Calu3 (cell line): ENCODE measurements at regions of chr11 and their contacts with region 1.

Region 1: DNA sequence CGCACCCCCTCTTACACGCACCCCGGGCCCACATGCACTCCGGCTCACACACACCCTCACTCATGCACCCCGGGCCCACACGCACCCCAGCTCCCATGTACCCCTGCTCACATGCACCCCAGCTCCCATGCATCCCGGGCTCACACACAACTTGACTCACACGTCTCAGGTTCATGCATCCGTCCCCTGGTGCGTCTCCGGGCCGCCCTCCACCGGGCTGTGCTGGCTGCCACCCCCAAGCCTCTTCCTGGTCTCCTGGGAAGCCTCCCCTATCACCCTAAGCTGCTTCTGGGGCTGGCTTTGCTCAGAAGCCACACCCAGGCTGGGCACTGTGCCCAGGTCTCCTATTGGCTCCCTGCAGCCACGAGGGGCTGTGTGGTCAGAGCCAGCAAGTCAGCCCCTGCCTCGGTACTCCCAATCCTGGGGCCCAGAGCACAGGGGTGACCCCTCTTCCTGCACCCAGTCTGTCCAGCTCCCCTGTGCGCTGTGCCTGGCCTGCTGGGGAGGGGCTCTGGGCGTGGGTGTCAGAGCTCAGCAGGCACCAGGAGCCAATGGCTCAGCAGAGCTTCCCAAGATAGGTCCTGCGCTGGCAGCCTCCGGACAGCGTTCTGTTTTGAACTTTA is 17.0 kb downstream of the TSPAN4 start:
- DNase-seq: peak; percentile 91
- H3K4me3 Mint-ChIP-seq: peak overlapping the region; percentile 72
- H3K27ac Mint-ChIP-seq: peak overlapping the region; percentile 74
- H3K4me1 Mint-ChIP-seq: peaks cover 9% of the 10 kb centered on the region
- H3K27me3 Mint-ChIP-seq: peaks cover 15% of the 10 kb centered on the region
- CTCF ChIP-seq: no peak

Region 2: DNA sequence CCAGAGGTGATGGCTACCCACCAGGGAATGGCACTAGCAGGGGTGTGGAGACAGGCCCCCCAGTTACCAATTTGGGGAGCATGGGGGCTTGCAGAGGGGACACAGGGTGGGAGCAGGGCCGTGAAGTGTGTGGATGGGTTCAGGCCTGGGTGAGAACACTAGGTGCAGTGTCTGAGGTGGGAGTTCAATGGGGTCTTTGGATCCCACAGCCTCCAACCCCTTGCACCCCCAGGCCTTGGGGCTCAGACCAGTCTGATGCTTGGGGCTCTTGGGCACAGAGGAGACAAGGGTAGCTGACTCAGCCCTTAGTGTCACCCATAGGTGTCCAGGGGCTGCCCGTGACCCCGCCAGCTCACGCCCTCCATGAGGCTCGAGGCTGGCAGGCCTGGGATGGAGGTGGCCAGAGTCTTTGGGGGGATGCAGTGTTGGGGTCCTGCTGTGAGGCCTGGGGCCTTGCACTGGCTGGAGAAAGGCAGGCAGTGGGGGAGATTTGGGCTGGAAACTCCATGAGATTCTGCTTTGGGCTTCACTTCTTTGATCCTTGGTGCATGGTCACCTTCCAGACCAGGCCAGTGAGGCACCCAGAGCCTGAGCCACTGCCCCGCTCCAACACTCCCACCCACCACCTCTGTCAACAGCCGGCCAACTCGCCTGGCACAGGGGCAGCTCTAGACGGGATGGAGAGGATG is 321.5 kb before region 1 on chr11:
- CTCF ChIA-PET with region 1: no interaction called
- intact Hi-C with region 1: no loop called
- DNase-seq: no peak
- H3K4me3 Mint-ChIP-seq: peak overlapping the region; percentile 90
- H3K27ac Mint-ChIP-seq: peak overlapping the region; percentile 66
- H3K4me1 Mint-ChIP-seq: peaks cover 7% of the 10 kb centered on the region
- H3K27me3 Mint-ChIP-seq: no peaks in the 10 kb centered on the region
- CTCF ChIP-seq: no peak

Region 3: DNA sequence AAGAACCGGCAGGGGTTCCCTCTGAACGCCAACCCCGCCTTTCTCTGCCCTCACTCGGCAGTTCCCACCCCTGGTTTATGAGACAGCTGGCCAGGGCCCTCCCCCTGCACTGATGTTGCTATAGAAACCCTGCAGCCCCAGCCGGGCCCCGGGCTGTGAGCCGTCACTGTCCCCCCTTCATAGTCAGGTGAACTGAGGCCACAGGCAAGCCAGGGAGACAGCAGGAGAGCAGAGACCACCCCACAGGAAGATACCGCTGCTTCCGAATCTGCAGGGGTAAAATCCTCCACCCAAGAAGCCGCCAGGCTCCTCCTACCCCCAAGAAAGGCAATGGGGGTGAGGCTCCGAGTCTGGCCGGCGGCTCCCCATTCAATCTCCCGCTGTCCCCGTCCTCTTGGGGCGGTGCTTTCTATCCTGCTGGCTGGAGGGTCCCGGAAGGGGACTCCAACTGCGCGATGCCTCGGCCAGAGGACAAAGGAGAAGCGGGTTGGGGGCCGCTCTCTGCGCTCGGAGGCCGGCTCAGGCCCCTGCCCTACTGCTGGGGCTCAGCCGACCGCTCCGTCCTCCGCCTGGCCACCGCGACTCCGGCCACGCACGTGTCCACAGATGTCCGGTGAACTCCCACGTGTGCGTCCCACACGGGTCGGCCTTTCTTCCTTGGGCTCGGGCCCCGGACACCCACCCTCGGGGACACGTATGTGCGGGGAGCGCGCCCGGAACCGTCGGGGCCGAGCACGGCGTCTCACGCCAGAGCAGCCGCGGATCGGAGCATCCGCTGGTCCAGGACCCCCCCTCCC is 62.1 kb before region 1 on chr11:
- CTCF ChIA-PET with region 1: interaction called, 20 read pairs
- intact Hi-C with region 1: no loop called
- DNase-seq: peak; percentile 74
- H3K4me3 Mint-ChIP-seq: peak overlapping the region; percentile 83
- H3K27ac Mint-ChIP-seq: peak overlapping the region; percentile 58
- H3K4me1 Mint-ChIP-seq: no peaks in the 10 kb centered on the region
- H3K27me3 Mint-ChIP-seq: no peaks in the 10 kb centered on the region
- CTCF ChIP-seq: no peak

Region 4: GRCh38 chr11:942823-943222 is 83.2 kb after region 1 on chr11:
- CTCF ChIA-PET with region 1: no interaction called
- intact Hi-C with region 1: no loop called
- DNase-seq: no peak
- H3K4me3 Mint-ChIP-seq: no peak overlapping the region
- H3K27ac Mint-ChIP-seq: peak overlapping the region; percentile 21
- H3K4me1 Mint-ChIP-seq: peaks cover 62% of the 10 kb centered on the region
- H3K27me3 Mint-ChIP-seq: no peaks in the 10 kb centered on the region
- CTCF ChIP-seq: no peak

Region 5: GRCh38 chr11:1041936-1042608 is 182.5 kb after region 1 on chr11:
- CTCF ChIA-PET with region 1: interaction called, 17 read pairs
- intact Hi-C with region 1: no loop called
- DNase-seq: peak; percentile 70
- H3K4me3 Mint-ChIP-seq: no peak overlapping the region
- H3K27ac Mint-ChIP-seq: no peak overlapping the region
- H3K4me1 Mint-ChIP-seq: peaks cover 16% of the 10 kb centered on the region
- H3K27me3 Mint-ChIP-seq: peaks cover 31% of the 10 kb centered on the region
- CTCF ChIP-seq: no peak

Region 6: DNA sequence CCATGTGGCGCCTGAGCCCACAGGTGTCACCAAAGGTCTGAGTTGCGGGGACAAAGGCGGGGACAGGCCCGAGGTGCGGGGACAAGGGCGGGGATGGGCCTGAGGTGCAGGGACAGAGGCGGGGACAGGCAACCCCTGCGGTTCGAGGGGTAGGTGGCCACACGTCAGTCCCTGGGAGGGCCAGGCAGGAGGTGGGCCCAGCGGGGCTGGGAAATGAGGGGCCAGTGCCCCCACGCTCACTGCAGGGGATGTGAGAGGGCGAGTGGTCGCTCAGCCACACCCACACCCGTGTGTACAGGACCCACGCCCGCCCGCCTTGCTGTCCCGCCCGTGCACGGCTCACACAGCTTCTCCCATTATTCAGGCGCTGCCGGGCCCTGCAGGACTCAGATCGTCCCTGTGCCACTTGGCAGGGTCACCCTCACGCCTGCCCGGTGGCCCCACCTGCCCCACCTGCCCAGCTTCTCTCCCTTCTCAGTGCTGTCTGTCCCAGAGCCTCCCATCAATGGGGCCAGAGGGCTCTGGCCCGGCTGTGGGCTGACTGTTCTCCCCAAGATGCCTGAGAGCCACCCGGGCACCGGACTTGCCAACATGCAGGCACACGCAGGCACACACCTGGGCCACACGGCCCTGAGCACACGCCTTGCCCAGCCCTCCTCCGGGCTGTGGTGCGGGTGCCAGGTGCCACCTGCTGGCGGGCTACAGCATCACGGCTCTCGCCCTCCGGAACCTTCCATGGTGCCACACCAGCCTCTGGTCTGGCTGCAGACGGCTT is 191.1 kb after region 1 on chr11:
- CTCF ChIA-PET with region 1: interaction called, 3 read pairs
- intact Hi-C with region 1: loop called (anchors 10 kb)
- DNase-seq: peak; percentile 89
- H3K4me3 Mint-ChIP-seq: no peak overlapping the region
- H3K27ac Mint-ChIP-seq: no peak overlapping the region
- H3K4me1 Mint-ChIP-seq: peaks cover 18% of the 10 kb centered on the region
- H3K27me3 Mint-ChIP-seq: peaks cover 29% of the 10 kb centered on the region
- CTCF ChIP-seq: peak; percentile 92